Left ventricle myocardium inferior (tissue), 1 donor: ENCODE measurements at regions of chr20 and their contacts with region 1.

Region 1: GRCh38 chr20:23349338-23350195 is 1.0 kb upstream of the NXT1 start:
- DNase-seq: peak; percentile 81
- H3K4me3 ChIP-seq: peak overlapping the region; percentile 99
- H3K27ac ChIP-seq: peak overlapping the region; percentile 100
- H3K4me1 ChIP-seq: peaks cover 31% of the 10 kb centered on the region
- H3K27me3 ChIP-seq: no peaks in the 10 kb centered on the region
- CTCF ChIP-seq: peak; percentile 60

Region 2: DNA sequence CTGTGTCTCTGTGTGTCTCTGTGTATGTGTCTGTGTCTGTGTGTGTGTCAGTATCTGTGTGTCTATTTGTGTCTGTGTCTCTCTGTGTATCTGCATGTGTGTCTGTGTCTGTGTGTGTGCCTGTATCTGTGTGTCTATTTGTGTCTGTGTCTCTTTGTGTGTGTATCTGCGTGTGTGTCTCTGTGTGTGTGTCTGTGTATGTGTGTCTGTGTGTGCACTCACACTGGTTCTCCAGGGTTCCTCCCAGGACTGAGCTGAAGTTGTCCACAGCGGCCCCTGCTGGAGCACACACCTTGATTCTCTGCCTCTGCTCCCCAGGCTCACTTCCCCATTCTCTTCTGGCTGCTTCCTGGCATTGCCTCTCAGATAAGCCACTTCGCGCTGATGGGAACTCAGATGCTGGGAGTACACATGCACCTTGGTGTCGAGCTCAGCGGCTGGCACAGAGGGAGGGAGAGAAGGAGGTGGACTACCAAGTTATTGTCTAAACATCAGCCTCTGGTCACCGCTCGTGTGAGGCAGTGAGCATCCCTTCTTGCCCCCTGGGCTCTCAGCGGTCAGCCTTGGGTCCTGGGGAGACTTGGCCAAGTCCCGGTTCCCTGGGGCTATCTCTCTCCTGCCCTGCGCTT is 103.9 kb before region 1 on chr20:
- intact Hi-C with region 1: loop called (anchors 10 kb)
- DNase-seq: peak; percentile 72
- H3K4me3 ChIP-seq: no peak overlapping the region
- H3K27ac ChIP-seq: peak overlapping the region; percentile 73
- H3K4me1 ChIP-seq: peaks cover 34% of the 10 kb centered on the region
- H3K27me3 ChIP-seq: peaks cover 23% of the 10 kb centered on the region
- CTCF ChIP-seq: peak; percentile 71